Motor neuron (in vitro differentiated cells): ENCODE measurements at regions of chr16 and their contacts with region 1.

Region 1: DNA sequence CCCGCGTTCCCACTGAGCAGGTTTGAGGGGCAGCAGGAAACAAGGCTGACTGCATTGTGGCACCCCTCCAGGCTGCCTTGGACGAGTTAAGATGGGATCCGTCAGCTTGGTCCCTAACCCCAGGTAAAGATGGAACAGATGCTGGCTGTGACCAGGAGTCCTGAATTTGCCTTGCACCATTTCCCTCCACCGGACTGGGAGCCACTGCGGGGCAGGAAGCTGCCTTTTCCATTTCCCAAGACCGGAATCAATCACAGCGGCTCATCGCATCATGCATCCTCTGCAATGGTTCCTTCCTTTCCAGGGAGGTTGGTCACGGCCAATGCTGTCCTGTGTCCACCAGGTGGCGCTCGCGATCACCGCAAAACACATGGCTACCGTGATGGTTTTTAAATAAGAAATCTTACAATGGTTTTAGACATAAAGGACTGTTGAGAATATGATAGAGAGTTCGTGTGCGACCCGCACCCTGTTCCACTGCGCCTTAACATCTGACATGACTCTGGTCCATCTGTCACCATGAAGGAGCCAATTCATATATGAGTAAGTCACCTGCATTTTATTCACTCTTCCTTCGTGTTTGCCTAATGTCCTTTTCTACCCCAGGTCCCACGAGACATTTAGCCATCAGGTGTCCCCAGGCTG is 6.8 kb upstream of the MEAK7 start:
- ATAC-seq: peak; percentile 84 to 94 (median 87)
- H3K4me3 ChIP-seq: peak overlapping the region in 1 of 5 donors; percentile 17
- H3K27ac ChIP-seq: no peak overlapping the region
- H3K4me1 ChIP-seq: peaks cover 32% of the 10 kb centered on the region in 2 donors

Region 2: DNA sequence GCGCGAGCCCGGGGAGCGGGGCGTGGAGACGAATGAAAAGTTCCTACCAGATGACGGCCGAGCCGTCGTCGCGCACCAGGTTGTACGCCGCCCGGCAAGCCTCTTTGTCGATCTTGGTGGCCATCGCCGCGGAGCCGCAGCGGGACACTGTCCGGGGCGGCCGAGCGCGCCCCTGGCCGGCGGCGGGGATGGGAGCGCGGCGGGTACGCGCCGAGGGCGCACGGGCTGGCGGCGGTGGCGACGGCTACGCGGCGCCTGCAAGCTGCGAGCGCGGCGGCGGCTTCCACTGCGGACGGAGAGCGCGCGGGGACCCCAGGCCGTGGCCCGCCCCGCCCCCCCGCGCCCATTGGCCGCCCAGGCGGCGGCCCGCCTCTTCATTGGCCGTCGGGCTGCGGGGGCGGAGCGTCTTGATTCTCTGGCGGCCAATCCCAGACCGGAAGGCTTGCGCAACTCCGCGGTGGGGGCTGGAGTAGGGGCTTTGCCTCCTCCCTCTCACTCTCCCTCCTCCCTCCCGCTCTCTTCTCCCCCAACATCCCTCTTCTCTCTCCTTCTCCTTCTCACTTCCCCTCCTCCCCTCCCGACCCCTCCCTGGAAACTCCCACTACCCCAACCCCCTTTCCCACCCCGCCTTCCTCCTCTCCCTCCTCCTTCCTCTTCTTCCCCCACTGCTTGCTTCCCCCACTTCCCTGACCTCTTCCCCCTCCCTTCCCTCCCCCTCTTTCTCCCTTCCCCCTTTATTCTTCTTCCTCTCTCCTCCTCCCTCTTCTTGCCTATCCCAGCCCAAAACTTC is 106.7 kb after region 1 on chr16 and contains the start of gene COTL1:
- in situ Hi-C with region 1: loop called in 8 of 9 experiments (anchors 10 to 25 kb)
- ATAC-seq: peak; percentile 75 to 93 (median 82)
- H3K4me3 ChIP-seq: peak within 1 kb of the TSS; percentile 68 to 97 (median 76)
- H3K27ac ChIP-seq: peak within 1 kb of the TSS; percentile 65 to 89
- H3K4me1 ChIP-seq: peaks cover 32 to 38% of the 10 kb centered on the region in 2 donors
- total RNA-seq, gene COTL1: 9.3 to 710 (median 111) TPM

Region 3: GRCh38 chr16:84629580-84629979 is 118.3 kb after region 1 on chr16:
- in situ Hi-C with region 1: loop called in 7 of 9 experiments (anchors 10 to 25 kb)
- ATAC-seq: no peak
- H3K4me3 ChIP-seq: no peak overlapping the region
- H3K27ac ChIP-seq: no peak overlapping the region
- H3K4me1 ChIP-seq: no peaks in the 10 kb centered on the region

Region 4: GRCh38 chr16:84726079-84726668 is 214.9 kb after region 1 on chr16:
- in situ Hi-C with region 1: loop called in 6 of 9 experiments (anchors 10 to 25 kb)
- ATAC-seq: peak; percentile 68 to 89 (median 85)
- H3K4me3 ChIP-seq: no peak overlapping the region
- H3K27ac ChIP-seq: no peak overlapping the region
- H3K4me1 ChIP-seq: peaks cover 37 to 45% of the 10 kb centered on the region in 2 donors